Dendritic cell treated with granulocyte-macrophage colony-stimulating factor and Interleukin-4, amounts not matched to agents 40 ng/mL and 50 ng/mL, for 4 days (primary cell): ENCODE measurements at regions of chr15 and their contacts with region 1.

Region 1: GRCh38 chr15:63221346-63221745 is 31.9 kb downstream of the RAB8B start:
- H3K4me3 Mint-ChIP-seq: no peak overlapping the region
- H3K27ac Mint-ChIP-seq: no peak overlapping the region
- H3K4me1 Mint-ChIP-seq: peaks cover 55% of the 10 kb centered on the region
- H3K27me3 Mint-ChIP-seq: no peaks in the 10 kb centered on the region

Region 2: GRCh38 chr15:63135804-63136203 is 85.5 kb before region 1 on chr15:
- intact Hi-C with region 1: no loop called
- H3K4me3 Mint-ChIP-seq: peak overlapping the region; percentile 44
- H3K27ac Mint-ChIP-seq: peak overlapping the region; percentile 89
- H3K4me1 Mint-ChIP-seq: peaks cover 38% of the 10 kb centered on the region
- H3K27me3 Mint-ChIP-seq: no peaks in the 10 kb centered on the region

Region 3: DNA sequence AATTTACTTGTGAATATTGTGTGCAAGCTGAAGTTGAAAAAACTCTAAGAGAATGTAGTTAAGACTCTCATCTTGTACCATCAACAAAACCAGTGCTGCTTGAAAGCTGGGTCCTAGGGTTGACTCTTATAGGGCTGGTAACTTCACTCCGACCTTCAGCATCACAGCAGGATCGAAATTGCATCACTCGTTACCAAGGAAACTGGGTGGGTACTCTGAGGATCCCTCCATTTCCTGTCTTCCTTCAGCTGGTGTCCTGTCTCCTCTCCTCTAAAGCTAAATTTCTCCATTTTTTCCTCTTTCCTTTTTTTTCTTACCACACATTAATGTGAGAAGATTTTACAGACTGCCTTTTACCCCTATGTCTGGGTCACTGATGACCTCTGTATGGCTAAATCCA is 53.1 kb after region 1 on chr15:
- intact Hi-C with region 1: loop called (anchors 5 kb)
- H3K4me3 Mint-ChIP-seq: no peak overlapping the region
- H3K27ac Mint-ChIP-seq: peak overlapping the region; percentile 58
- H3K4me1 Mint-ChIP-seq: peaks cover 38% of the 10 kb centered on the region
- H3K27me3 Mint-ChIP-seq: no peaks in the 10 kb centered on the region